Activated T-helper 1 cell treated with anti-CD3 and anti-CD28 coated beads, Interleukin-12 subunit alpha, Interleukin-12 subunit beta, Interleukin-2, Interleukin-4 antibody, amounts not matched to agents 30 ng/mL and 10 ng/mL and 1 ng/mL, durations not matched to agents 14 hours and 24 hours and 36 hours (primary cell): ENCODE measurements at regions of chr21 and their contacts with region 1.

Region 1: GRCh38 chr21:32929633-32930038 is 96.1 kb upstream of the OLIG2 start:
- DNase-seq: no peak
- H3K4me3 Mint-ChIP-seq: no peak overlapping the region
- H3K27ac Mint-ChIP-seq: no peak overlapping the region
- H3K4me1 Mint-ChIP-seq: peaks cover 31% of the 10 kb centered on the region
- H3K27me3 Mint-ChIP-seq: no peaks in the 10 kb centered on the region

Region 2: GRCh38 chr21:32044205-32045180 is 885.1 kb before region 1 on chr21:
- intact Hi-C with region 1: no loop called
- DNase-seq: no peak
- H3K4me3 Mint-ChIP-seq: no peak overlapping the region
- H3K27ac Mint-ChIP-seq: no peak overlapping the region
- H3K4me1 Mint-ChIP-seq: no peaks in the 10 kb centered on the region
- H3K27me3 Mint-ChIP-seq: no peaks in the 10 kb centered on the region

Region 3: DNA sequence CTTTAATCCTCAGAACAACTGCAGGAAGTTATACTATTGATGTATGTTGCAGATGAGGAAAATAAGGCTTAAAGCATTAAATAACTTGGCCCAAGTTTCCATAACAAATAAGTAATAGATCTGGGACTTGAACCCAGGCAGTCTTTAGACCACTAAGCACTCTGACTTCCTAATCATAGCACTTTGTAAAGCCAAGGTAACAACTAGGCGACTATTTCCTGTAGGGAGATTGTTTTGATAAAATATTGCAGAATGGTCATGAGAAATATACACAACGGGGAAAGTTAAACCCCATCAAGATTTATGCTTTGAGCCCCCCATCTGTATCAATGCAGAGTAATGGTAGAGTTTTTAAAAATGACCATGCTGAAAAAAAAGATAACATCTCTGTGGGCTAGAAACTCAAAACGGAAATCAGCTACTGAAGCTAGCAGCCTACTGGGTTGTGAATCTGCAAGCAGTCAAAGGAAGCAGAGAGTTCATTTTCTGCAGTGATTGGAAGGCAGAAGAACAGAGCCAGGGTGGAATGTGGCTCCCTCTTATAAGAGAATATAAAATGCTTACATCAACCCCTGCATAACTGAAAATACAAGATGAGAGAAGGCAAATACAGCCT is 15.1 kb before region 1 on chr21:
- intact Hi-C with region 1: loop called (anchors 2 kb)
- DNase-seq: no peak
- H3K4me3 Mint-ChIP-seq: no peak overlapping the region
- H3K27ac Mint-ChIP-seq: no peak overlapping the region
- H3K4me1 Mint-ChIP-seq: peaks cover 9% of the 10 kb centered on the region
- H3K27me3 Mint-ChIP-seq: peaks cover 10% of the 10 kb centered on the region